CD8-positive, alpha-beta T cell (primary cell): ENCODE measurements at regions of chr17 and their contacts with region 1.

Region 1: GRCh38 chr17:8057691-8058114 is 18.8 kb downstream of the ALOX15B start:
- DNase-seq: peak in 7 of 9 experiments; percentile 15 to 83 (median 51)
- ATAC-seq: peak; percentile 93
- H3K4me3 ChIP-seq: no peak overlapping the region
- H3K4me3 Mint-ChIP-seq: no peak overlapping the region
- H3K27ac ChIP-seq: no peak overlapping the region
- H3K27ac Mint-ChIP-seq: no peak overlapping the region
- H3K4me1 ChIP-seq: no peaks in the 10 kb centered on the region
- H3K4me1 Mint-ChIP-seq: peaks cover 12% of the 10 kb centered on the region
- H3K27me3 ChIP-seq: peaks cover 0 to 8% of the 10 kb centered on the region in 2 experiments
- H3K27me3 Mint-ChIP-seq: peaks cover 57% of the 10 kb centered on the region
- CTCF ChIP-seq: peak; percentile 69

Region 2: DNA sequence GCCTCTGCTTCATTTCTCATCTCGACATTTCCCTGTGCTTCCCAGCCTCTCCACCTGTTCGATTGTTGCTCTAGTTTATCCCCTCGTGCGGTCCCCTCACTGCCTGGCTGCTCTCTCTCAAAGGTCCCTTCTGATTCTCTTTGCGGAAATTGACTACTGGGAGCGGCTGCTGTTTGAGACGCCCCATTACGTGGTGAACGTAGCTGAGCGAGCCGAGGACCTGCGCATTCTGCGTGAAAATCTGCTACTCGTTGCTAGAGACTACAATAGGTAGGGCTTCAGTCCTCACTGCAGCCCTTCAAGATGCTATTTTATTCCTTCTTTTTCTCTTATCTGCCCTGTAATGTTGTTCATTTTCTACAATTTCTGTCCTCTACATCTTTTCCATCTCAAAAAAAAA is 300.7 kb before region 1 on chr17:
- CTCF ChIA-PET with region 1: no interaction called
- POLR2A ChIA-PET with region 1: no interaction called
- intact Hi-C with region 1: no loop called
- DNase-seq: no peak
- ATAC-seq: no peak
- H3K4me3 ChIP-seq: no peak overlapping the region
- H3K4me3 Mint-ChIP-seq: no peak overlapping the region
- H3K27ac ChIP-seq: no peak overlapping the region
- H3K27ac Mint-ChIP-seq: no peak overlapping the region
- H3K4me1 ChIP-seq: no peaks in the 10 kb centered on the region
- H3K4me1 Mint-ChIP-seq: no peaks in the 10 kb centered on the region
- H3K27me3 ChIP-seq: no peaks in the 10 kb centered on the region
- H3K27me3 Mint-ChIP-seq: peaks cover 14% of the 10 kb centered on the region
- CTCF ChIP-seq: no peak

Region 3: DNA sequence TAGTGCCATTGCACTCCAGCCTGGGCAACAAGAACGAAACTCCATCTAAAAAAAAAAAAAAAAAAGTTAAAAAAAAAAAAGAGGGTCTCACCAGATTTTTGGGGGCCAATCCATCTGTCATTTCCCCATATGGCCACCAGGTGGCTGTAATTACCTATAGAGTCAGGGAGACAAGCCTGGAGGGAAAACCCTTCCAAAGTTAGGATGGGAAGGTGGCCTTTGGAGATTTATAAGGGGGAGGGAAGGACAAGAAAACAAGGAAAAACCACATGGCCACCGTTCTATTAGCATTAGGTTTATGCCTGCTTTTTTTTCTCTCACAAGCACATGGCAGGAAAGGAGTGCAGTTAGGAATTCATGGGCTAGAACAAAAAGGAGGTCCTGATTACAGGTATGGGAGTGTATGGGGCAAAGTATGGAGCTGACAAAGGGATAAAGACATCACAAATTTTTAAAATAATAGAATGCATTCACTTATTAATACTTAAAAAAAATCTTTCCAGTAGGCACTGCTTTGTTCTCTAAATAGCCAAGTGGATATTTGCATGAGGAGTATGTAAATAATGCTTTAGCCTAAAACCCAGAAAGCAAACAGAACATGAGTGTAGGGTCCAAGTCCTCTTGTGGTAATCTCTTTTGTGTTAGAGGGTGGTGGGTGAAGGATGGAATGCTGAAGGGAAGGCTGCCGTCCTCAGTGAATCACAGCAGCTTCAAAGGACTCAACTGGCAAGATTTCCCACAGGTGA is 194.8 kb before region 1 on chr17:
- CTCF ChIA-PET with region 1: interaction called, 10 read pairs
- POLR2A ChIA-PET with region 1: no interaction called
- intact Hi-C with region 1: loop called in 1 of 2 experiments (anchors 2 kb)
- DNase-seq: peak in 7 of 9 experiments; percentile 19 to 78 (median 66)
- ATAC-seq: no peak
- H3K4me3 ChIP-seq: no peak overlapping the region
- H3K4me3 Mint-ChIP-seq: no peak overlapping the region
- H3K27ac ChIP-seq: no peak overlapping the region
- H3K27ac Mint-ChIP-seq: no peak overlapping the region
- H3K4me1 ChIP-seq: peaks cover 20% of the 10 kb centered on the region
- H3K4me1 Mint-ChIP-seq: peaks cover 17% of the 10 kb centered on the region
- H3K27me3 ChIP-seq: no peaks in the 10 kb centered on the region
- H3K27me3 Mint-ChIP-seq: no peaks in the 10 kb centered on the region
- CTCF ChIP-seq: peak; percentile 75

Region 4: DNA sequence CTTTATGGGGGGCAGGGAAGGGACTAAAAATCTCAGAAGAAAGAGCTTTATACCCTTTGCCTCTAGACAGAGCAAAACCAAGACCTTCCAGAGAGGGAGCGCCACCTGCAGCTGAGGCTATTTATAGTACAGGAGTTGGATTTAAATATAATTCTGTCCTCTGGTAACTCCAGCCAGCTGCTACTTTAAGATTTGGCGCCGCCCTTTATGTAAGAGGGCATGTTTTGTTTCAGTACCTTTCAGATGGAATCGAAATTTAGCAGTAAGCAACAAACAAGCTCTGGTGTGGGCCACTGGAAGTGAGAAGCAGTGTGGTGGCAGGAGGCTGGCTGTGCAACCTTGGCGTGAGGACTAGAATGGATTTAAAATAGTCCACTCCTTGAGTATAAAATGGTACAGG is 60.5 kb before region 1 on chr17:
- CTCF ChIA-PET with region 1: interaction called, 9 read pairs
- POLR2A ChIA-PET with region 1: no interaction called
- intact Hi-C with region 1: loop called in 1 of 2 experiments (anchors 2 kb)
- DNase-seq: peak in 5 of 9 experiments; percentile 17 to 50 (median 36)
- ATAC-seq: peak; percentile 59
- H3K4me3 ChIP-seq: no peak overlapping the region
- H3K4me3 Mint-ChIP-seq: no peak overlapping the region
- H3K27ac ChIP-seq: no peak overlapping the region
- H3K27ac Mint-ChIP-seq: no peak overlapping the region
- H3K4me1 ChIP-seq: peaks cover 4% of the 10 kb centered on the region
- H3K4me1 Mint-ChIP-seq: peaks cover 5% of the 10 kb centered on the region
- H3K27me3 ChIP-seq: peaks cover 5 to 7% of the 10 kb centered on the region in 2 experiments
- H3K27me3 Mint-ChIP-seq: peaks cover 28% of the 10 kb centered on the region
- CTCF ChIP-seq: peak; percentile 25

Region 5: DNA sequence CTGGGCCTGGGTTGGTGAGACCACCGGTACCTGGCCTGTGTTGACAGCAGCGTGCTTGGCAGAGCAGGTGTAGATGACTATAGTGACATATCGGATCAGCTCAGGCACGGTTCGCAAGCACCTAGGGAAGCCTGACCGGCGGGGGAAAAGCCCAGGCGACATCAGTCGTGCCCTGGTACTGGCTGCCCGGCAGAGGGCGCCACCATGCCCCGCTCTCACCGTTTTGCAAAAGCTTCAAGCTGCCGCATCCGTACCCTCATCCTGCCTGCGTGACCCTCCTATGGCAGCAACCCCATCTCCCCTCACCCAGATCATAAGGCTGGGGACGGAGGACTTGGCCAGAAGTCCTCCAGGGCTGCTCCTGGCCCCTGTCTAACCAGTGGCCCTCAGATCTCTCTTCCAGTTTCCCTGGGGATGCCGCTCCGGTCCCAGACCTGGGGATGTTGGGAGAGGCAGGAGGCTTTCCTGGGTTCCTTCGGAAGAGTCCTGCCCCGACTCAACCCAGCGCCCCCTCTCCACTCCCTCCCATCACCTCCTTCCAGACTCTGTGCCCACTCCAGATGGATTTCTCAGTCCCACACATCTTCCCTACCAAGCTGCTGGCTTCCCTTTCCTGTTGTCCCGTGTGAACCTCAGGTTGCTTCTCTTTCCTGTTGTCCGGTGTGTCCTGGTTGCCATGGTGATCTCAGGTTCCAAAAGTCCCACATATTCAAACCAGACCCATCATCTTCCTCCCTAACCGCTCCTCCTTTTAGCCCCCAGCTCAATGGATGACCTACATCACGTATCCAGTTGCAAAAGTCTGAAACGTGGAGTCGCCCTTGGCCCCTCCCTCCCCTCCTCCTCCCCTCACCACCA is 16.2 kb after region 1 on chr17:
- CTCF ChIA-PET with region 1: interaction called, 124 read pairs
- POLR2A ChIA-PET with region 1: interaction called, 6 read pairs
- intact Hi-C with region 1: loop called (anchors 1 kb)
- DNase-seq: peak; percentile 74 to 93 (median 88)
- ATAC-seq: peak; percentile 96
- H3K4me3 ChIP-seq: peak overlapping the region in 1 of 2 experiments; percentile 45
- H3K4me3 Mint-ChIP-seq: peak overlapping the region; percentile 84
- H3K27ac ChIP-seq: no peak overlapping the region
- H3K27ac Mint-ChIP-seq: peak overlapping the region; percentile 37
- H3K4me1 ChIP-seq: peaks cover 22% of the 10 kb centered on the region
- H3K4me1 Mint-ChIP-seq: peaks cover 22% of the 10 kb centered on the region
- H3K27me3 ChIP-seq: peaks cover 11 to 22% of the 10 kb centered on the region in 2 experiments
- H3K27me3 Mint-ChIP-seq: peaks cover 36% of the 10 kb centered on the region
- CTCF ChIP-seq: peak; percentile 89

Region 6: GRCh38 chr17:8118769-8119580 is 61.3 kb after region 1 on chr17:
- CTCF ChIA-PET with region 1: interaction called, 22 read pairs
- POLR2A ChIA-PET with region 1: interaction called, 5 read pairs
- intact Hi-C with region 1: loop called in 1 of 2 experiments (anchors 2 kb)
- DNase-seq: peak; percentile 70 to 90 (median 83)
- ATAC-seq: peak; percentile 62
- H3K4me3 ChIP-seq: peak overlapping the region; percentile 69 to 77
- H3K4me3 Mint-ChIP-seq: peak overlapping the region; percentile 93
- H3K27ac ChIP-seq: peak overlapping the region; percentile 32 to 53
- H3K27ac Mint-ChIP-seq: peak overlapping the region; percentile 95
- H3K4me1 ChIP-seq: peaks cover 46% of the 10 kb centered on the region
- H3K4me1 Mint-ChIP-seq: peaks cover 45% of the 10 kb centered on the region
- H3K27me3 ChIP-seq: peaks cover 0 to 57% of the 10 kb centered on the region in 2 experiments
- H3K27me3 Mint-ChIP-seq: peaks cover 33% of the 10 kb centered on the region
- CTCF ChIP-seq: peak; percentile 88

Region 7: GRCh38 chr17:8991514-8992285 is 934.0 kb after region 1 on chr17:
- CTCF ChIA-PET with region 1: interaction called, 4 read pairs
- POLR2A ChIA-PET with region 1: no interaction called
- intact Hi-C with region 1: loop called (anchors 5 kb)
- DNase-seq: peak; percentile 31 to 81 (median 71)
- ATAC-seq: peak; percentile 80
- H3K4me3 ChIP-seq: no peak overlapping the region
- H3K4me3 Mint-ChIP-seq: no peak overlapping the region
- H3K27ac ChIP-seq: no peak overlapping the region
- H3K27ac Mint-ChIP-seq: no peak overlapping the region
- H3K4me1 ChIP-seq: peaks cover 9% of the 10 kb centered on the region
- H3K4me1 Mint-ChIP-seq: peaks cover 7% of the 10 kb centered on the region
- H3K27me3 ChIP-seq: no peaks in the 10 kb centered on the region
- H3K27me3 Mint-ChIP-seq: no peaks in the 10 kb centered on the region
- CTCF ChIP-seq: peak; percentile 73